Activated CD4-positive, alpha-beta T cell treated with anti-CD3 and anti-CD28 coated beads for 36 hours (primary cell): ENCODE measurements at regions of chr13 and their contacts with region 1.

Region 1: GRCh38 chr13:38349390-38350113 is at the start of gene UFM1:
- DNase-seq: peak; percentile 92
- ATAC-seq: peak; percentile 93
- H3K4me3 Mint-ChIP-seq: peak within 1 kb of the TSS; percentile 98
- H3K27ac Mint-ChIP-seq: peak within 1 kb of the TSS; percentile 99
- H3K4me1 Mint-ChIP-seq: peaks cover 35% of the 10 kb centered on the region
- H3K27me3 Mint-ChIP-seq: no peaks in the 10 kb centered on the region
- total RNA-seq, gene UFM1: 36.7 to 44.8 TPM

Region 2: GRCh38 chr13:36999054-36999714 is 1350.4 kb before region 1 on chr13 and contains the start of gene ALG5:
- CTCF ChIA-PET with region 1: no interaction called
- POLR2A ChIA-PET with region 1: interaction called, 4 read pairs
- intact Hi-C with region 1: loop called in 1 of 2 experiments (anchors 1 kb)
- DNase-seq: peak; percentile 94
- ATAC-seq: peak; percentile 66
- H3K4me3 Mint-ChIP-seq: peak within 1 kb of the TSS; percentile 97
- H3K27ac Mint-ChIP-seq: peak within 1 kb of the TSS; percentile 100
- H3K4me1 Mint-ChIP-seq: peaks cover 29% of the 10 kb centered on the region
- H3K27me3 Mint-ChIP-seq: no peaks in the 10 kb centered on the region
- total RNA-seq, gene ALG5: 21.1 to 28.3 TPM